Gastrocnemius medialis (tissue), 4 donors: ENCODE measurements at regions of chr22 and their contacts with region 1.

Region 1: GRCh38 chr22:23970816-23971486 is 3.3 kb downstream of the DDT start:
- DNase-seq: no peak
- ATAC-seq: no peak
- H3K4me3 ChIP-seq: no peak overlapping the region
- H3K27ac ChIP-seq: no peak overlapping the region
- H3K4me1 ChIP-seq: no peaks in the 10 kb centered on the region
- H3K27me3 ChIP-seq: no peaks in the 10 kb centered on the region
- CTCF ChIP-seq: no peak
- POLR2A ChIP-seq: no peak

Region 2: DNA sequence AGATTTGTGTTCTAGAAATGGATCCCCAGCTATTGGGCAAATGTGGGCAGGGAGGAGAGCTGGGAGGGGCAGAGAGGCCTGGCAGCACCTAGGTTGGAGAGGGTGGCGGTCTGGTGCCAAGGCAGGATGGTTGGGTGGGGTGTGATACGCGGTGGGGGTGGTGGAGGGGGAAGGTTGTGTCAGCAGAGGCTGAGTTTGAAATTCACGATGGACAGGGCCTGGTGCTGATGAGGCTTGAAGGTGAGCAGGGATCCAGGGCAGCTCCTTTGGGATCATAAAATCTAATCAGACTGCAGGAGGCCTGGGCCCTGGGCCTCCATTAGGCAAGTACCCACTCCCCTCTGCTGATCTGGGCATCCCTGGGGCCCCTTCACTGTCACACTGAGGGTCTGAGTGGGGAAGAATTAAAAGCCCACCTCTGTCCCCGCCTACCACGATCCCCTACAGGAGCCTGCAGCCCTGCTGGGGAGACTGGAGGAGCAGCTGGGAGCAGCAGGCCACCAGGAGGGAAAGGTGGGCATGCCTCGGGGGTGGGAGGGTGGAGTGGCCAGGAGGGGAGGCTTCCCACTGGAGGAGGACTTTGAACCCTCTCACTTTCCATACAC is 414.8 kb before region 1 on chr22:
- in situ Hi-C with region 1: no loop called
- intact Hi-C with region 1: no loop called
- DNase-seq: no peak
- ATAC-seq: no peak
- H3K4me3 ChIP-seq: no peak overlapping the region
- H3K27ac ChIP-seq: no peak overlapping the region
- H3K4me1 ChIP-seq: no peaks in the 10 kb centered on the region
- H3K27me3 ChIP-seq: peaks cover 0 to 18% (median 13%) of the 10 kb centered on the region in 3 donors
- CTCF ChIP-seq: no peak
- POLR2A ChIP-seq: no peak

Region 3: GRCh38 chr22:23893943-23894709 is 76.8 kb before region 1 on chr22 and contains the start of gene MIF:
- in situ Hi-C with region 1: no loop called
- intact Hi-C with region 1: no loop called
- DNase-seq: peak; percentile 78 to 89
- ATAC-seq: peak; percentile 90 to 91
- H3K4me3 ChIP-seq: peak within 1 kb of the TSS; percentile 67 to 94 (median 78)
- H3K27ac ChIP-seq: peak within 1 kb of the TSS; percentile 83 to 95 (median 88)
- H3K4me1 ChIP-seq: peaks cover 12 to 19% of the 10 kb centered on the region in 2 donors
- H3K27me3 ChIP-seq: no peaks in the 10 kb centered on the region
- CTCF ChIP-seq: peak; percentile 65 to 86 (median 76)
- POLR2A ChIP-seq: peak; percentile 88 to 89
- total RNA-seq, gene MIF: 78.1 to 145 (median 129) TPM

Region 4: DNA sequence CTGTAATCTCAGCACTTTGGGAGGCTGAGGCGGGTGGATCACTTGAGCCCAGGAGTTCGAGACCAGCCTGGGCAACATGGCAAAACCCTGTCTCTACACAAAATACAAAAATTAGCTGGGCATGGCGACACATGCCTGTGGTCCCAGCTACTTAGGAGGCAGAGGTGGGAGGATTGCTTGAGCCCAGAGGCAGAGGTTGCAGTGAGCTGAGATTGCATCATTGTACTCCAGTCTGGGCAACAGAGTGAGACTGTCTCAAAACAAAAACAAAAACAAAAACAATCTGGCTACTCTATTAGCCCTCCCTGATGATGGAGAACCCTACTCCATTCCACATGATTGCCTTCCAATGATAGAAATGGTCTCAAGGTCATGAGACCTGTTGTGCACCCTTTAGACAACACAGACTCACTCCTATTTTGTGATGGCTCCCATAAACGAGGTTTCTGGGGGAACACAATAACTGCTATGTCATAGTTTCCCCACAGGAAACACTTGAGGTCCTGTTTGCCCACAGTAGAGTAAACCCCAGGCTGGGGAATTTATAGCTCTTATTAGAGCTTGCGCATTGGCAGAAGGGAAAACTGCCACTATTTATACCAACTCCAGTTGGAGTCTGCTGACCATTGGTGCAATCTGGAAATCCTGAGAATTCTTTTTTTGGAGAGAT is 48.2 kb before region 1 on chr22:
- in situ Hi-C with region 1: loop called in 1 of 4 experiments (anchors 10 kb)
- intact Hi-C with region 1: no loop called
- DNase-seq: no peak
- ATAC-seq: no peak
- H3K4me3 ChIP-seq: no peak overlapping the region
- H3K27ac ChIP-seq: no peak overlapping the region
- H3K4me1 ChIP-seq: no peaks in the 10 kb centered on the region
- H3K27me3 ChIP-seq: no peaks in the 10 kb centered on the region
- CTCF ChIP-seq: no peak
- POLR2A ChIP-seq: no peak

Region 5: GRCh38 chr22:24028533-24028932 is 57.6 kb after region 1 on chr22:
- in situ Hi-C with region 1: no loop called
- intact Hi-C with region 1: no loop called
- DNase-seq: no peak
- ATAC-seq: no peak
- H3K4me3 ChIP-seq: no peak overlapping the region
- H3K27ac ChIP-seq: no peak overlapping the region
- H3K4me1 ChIP-seq: peaks cover 15 to 27% of the 10 kb centered on the region in 2 donors
- H3K27me3 ChIP-seq: no peaks in the 10 kb centered on the region
- CTCF ChIP-seq: no peak
- POLR2A ChIP-seq: no peak

Region 6: DNA sequence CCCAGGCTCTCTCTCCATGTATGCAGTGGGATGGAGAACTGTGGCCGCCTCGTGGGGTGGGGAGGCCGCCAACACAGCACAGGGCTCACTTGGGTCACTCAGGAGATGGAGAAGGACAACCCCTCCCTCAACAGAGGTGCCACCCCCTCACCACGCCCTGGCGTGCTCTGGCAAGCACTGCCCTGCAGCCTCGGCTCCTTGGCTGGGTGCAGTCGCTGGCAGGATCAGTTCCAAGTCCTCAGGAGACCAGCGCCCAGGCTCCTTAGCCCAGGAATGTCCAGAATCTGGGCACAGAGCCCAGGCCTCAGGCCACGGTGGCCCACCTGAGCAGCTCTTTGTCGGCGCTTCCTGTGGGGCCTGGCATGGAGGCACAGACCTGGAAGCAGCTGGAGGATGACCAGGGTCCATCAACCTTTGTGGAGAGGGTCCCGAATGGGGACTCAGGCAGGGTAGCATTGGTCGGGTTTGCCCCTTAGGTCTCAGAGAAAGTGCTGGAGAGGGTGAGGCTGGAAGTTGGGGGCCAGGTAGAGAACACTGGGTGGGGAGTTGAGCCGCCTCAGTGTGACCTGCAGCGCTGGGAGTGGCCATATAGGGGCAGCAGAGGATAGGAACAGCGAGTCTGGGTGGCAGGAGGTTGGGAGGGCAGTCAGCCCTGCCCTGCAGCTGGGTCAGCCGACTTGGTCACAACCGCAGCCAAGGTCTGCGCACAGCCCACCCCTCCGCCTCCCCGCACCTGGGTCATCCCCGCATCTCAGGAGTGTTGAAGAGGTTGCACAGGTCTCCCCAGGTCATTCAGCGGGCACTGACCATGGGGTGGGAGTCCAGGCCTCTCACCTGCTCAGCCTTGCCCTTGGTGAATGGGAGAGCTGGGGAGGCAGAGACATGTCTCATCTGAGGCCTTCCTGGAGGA is 218.6 kb after region 1 on chr22:
- in situ Hi-C with region 1: no loop called
- intact Hi-C with region 1: no loop called
- DNase-seq: peak; percentile 42 to 56
- ATAC-seq: peak; percentile 84 to 91
- H3K4me3 ChIP-seq: no peak overlapping the region
- H3K27ac ChIP-seq: no peak overlapping the region
- H3K4me1 ChIP-seq: peaks cover 0 to 7% of the 10 kb centered on the region in 2 donors
- H3K27me3 ChIP-seq: no peaks in the 10 kb centered on the region
- CTCF ChIP-seq: peak; percentile 87 to 95 (median 89)
- POLR2A ChIP-seq: no peak